ENCODE measurements at regions of chr13 and their contacts with region 1.

Region 1: DNA sequence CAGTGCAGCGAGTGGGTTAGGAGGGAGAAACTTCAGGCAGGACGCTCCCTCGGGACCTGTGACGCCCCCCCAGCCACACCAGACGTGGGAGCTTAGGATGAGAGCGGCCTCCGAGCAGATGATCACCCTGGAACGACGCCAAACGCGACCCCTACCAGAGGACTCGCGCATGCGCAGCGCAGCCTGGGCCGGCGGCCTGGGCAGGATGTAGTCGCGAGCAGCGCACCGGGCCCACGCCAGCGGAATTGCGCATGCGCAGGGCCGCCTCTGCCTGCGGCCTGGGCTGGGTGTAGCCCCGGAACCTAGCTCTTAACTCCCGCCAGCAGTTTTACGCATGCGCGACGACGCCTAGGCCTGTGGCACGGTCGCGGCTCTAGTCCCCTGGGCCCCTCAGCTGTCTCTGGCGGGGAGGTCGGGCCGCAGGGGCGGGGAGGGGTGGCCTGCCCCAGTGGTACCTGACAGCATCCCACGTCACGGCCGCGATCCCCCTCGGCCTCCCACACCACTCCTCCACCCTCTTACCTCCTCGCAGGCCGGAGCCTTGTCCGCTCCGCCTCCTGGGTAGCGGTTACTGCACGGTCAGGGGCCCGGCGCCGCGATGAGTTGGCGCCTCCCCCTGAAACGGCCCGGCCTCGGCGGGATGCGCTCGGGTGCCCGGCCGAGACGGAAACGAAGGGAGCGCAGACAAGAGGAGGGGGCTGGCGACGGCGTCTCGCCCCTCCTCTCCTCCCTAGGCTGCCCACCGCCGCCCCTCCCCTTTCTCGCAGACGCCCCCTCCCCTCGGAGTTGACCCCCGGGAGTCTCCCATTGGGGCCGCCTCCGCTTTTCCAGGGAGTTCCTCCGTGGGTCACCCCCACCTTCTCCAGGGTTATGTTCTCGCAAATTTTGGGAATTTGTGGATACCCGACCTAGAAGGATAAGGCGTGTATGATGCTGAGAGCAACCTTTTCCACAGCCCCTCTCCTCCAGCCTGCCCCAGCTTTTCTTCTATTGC is at the start of gene RCBTB2:
- DNase-seq: peak; percentile 97 to 100 (median 99)
- ATAC-seq: peak; percentile 92
- H3K4me3 ChIP-seq: peak within 1 kb of the TSS; percentile 80
- H3K4me3 Mint-ChIP-seq: peak within 1 kb of the TSS; percentile 83 to 99 (median 94)
- H3K27ac ChIP-seq: peak within 1 kb of the TSS; percentile 96
- H3K27ac Mint-ChIP-seq: peak within 1 kb of the TSS; percentile 98 to 100 (median 99)
- H3K4me1 ChIP-seq: peaks cover 10 to 16% of the 10 kb centered on the region in 2 donors
- H3K4me1 Mint-ChIP-seq: peaks cover 11 to 44% (median 31%) of the 10 kb centered on the region in 7 donors
- H3K27me3 ChIP-seq: no peaks in the 10 kb centered on the region
- H3K27me3 Mint-ChIP-seq: peaks cover 0 to 18% (median 0%) of the 10 kb centered on the region in 5 donors
- total RNA-seq, gene RCBTB2: 7.6 to 17.8 (median 10.1) TPM

Region 2: GRCh38 chr13:48094781-48095502 is 437.9 kb before region 1 on chr13 and contains the start of gene MED4:
- CTCF ChIA-PET with region 1: no interaction called
- POLR2A ChIA-PET with region 1: no interaction called
- intact Hi-C with region 1: loop called (anchors 1 to 2 kb)
- DNase-seq: peak; percentile 94 to 99 (median 98)
- ATAC-seq: peak; percentile 100
- H3K4me3 ChIP-seq: peak within 1 kb of the TSS; percentile 90
- H3K4me3 Mint-ChIP-seq: peak within 1 kb of the TSS; percentile 94 to 99 (median 96)
- H3K27ac ChIP-seq: peak within 1 kb of the TSS; percentile 99
- H3K27ac Mint-ChIP-seq: peak within 1 kb of the TSS; percentile 92 to 98 (median 96)
- H3K4me1 ChIP-seq: peaks cover 13 to 26% of the 10 kb centered on the region in 2 donors
- H3K4me1 Mint-ChIP-seq: peaks cover 26 to 56% (median 48%) of the 10 kb centered on the region in 7 donors
- H3K27me3 ChIP-seq: no peaks in the 10 kb centered on the region
- H3K27me3 Mint-ChIP-seq: peaks cover 0 to 9% (median 0%) of the 10 kb centered on the region in 5 donors
- total RNA-seq, gene MED4: 43.4 to 60.9 (median 50.0) TPM

Region 3: GRCh38 chr13:48386816-48387215 is 146.0 kb before region 1 on chr13:
- CTCF ChIA-PET with region 1: no interaction called
- POLR2A ChIA-PET with region 1: no interaction called
- intact Hi-C with region 1: no loop called
- DNase-seq: no peak
- ATAC-seq: no peak
- H3K4me3 ChIP-seq: no peak overlapping the region
- H3K4me3 Mint-ChIP-seq: no peak overlapping the region
- H3K27ac ChIP-seq: no peak overlapping the region
- H3K27ac Mint-ChIP-seq: no peak overlapping the region
- H3K4me1 ChIP-seq: no peaks in the 10 kb centered on the region
- H3K4me1 Mint-ChIP-seq: peaks cover 0 to 10% (median 6%) of the 10 kb centered on the region in 7 donors
- H3K27me3 ChIP-seq: no peaks in the 10 kb centered on the region
- H3K27me3 Mint-ChIP-seq: no peaks in the 10 kb centered on the region

Region 4: GRCh38 chr13:48412881-48413351 is 119.9 kb before region 1 on chr13 and contains the start of gene LPAR6:
- CTCF ChIA-PET with region 1: no interaction called
- POLR2A ChIA-PET with region 1: interaction called, 39 read pairs
- intact Hi-C with region 1: loop called (anchors 1 kb)
- DNase-seq: peak in 7 of 9 donors; percentile 30 to 55 (median 47)
- ATAC-seq: peak; percentile 67
- H3K4me3 ChIP-seq: peak within 1 kb of the TSS; percentile 73
- H3K4me3 Mint-ChIP-seq: peak within 1 kb of the TSS; percentile 86 to 100 (median 98)
- H3K27ac ChIP-seq: peak within 1 kb of the TSS; percentile 90
- H3K27ac Mint-ChIP-seq: peak within 1 kb of the TSS; percentile 92 to 100 (median 94)
- H3K4me1 ChIP-seq: peaks cover 9 to 19% of the 10 kb centered on the region in 2 donors
- H3K4me1 Mint-ChIP-seq: peaks cover 19 to 47% (median 40%) of the 10 kb centered on the region in 7 donors
- H3K27me3 ChIP-seq: no peaks in the 10 kb centered on the region
- H3K27me3 Mint-ChIP-seq: no peaks in the 10 kb centered on the region
- total RNA-seq, gene LPAR6: 24.1 to 60.4 (median 32.8) TPM

Region 5: GRCh38 chr13:48510698-48511097 is 22.1 kb before region 1 on chr13:
- CTCF ChIA-PET with region 1: interaction called, 4 read pairs
- POLR2A ChIA-PET with region 1: interaction called, 83 read pairs
- intact Hi-C with region 1: loop called (anchors 1 kb)
- DNase-seq: no peak
- ATAC-seq: no peak
- H3K4me3 ChIP-seq: no peak overlapping the region
- H3K4me3 Mint-ChIP-seq: no peak overlapping the region
- H3K27ac ChIP-seq: no peak overlapping the region
- H3K27ac Mint-ChIP-seq: no peak overlapping the region
- H3K4me1 ChIP-seq: peaks cover 17 to 28% of the 10 kb centered on the region in 2 donors
- H3K4me1 Mint-ChIP-seq: peaks cover 21 to 35% (median 31%) of the 10 kb centered on the region in 7 donors
- H3K27me3 ChIP-seq: no peaks in the 10 kb centered on the region
- H3K27me3 Mint-ChIP-seq: peaks cover 0 to 28% (median 0%) of the 10 kb centered on the region in 5 donors

Region 6: GRCh38 chr13:48571126-48571913 is 38.5 kb after region 1 on chr13:
- CTCF ChIA-PET with region 1: no interaction called
- POLR2A ChIA-PET with region 1: interaction called, 19 read pairs
- intact Hi-C with region 1: no loop called
- DNase-seq: no peak
- ATAC-seq: no peak
- H3K4me3 ChIP-seq: no peak overlapping the region
- H3K4me3 Mint-ChIP-seq: peak overlapping the region in 4 of 10 donors; percentile 9 to 50 (median 38)
- H3K27ac ChIP-seq: no peak overlapping the region
- H3K27ac Mint-ChIP-seq: no peak overlapping the region
- H3K4me1 ChIP-seq: peaks cover 0 to 11% of the 10 kb centered on the region in 2 donors
- H3K4me1 Mint-ChIP-seq: peaks cover 0 to 39% (median 27%) of the 10 kb centered on the region in 7 donors
- H3K27me3 ChIP-seq: no peaks in the 10 kb centered on the region
- H3K27me3 Mint-ChIP-seq: peaks cover 0 to 62% (median 4%) of the 10 kb centered on the region in 5 donors

Region 7: DNA sequence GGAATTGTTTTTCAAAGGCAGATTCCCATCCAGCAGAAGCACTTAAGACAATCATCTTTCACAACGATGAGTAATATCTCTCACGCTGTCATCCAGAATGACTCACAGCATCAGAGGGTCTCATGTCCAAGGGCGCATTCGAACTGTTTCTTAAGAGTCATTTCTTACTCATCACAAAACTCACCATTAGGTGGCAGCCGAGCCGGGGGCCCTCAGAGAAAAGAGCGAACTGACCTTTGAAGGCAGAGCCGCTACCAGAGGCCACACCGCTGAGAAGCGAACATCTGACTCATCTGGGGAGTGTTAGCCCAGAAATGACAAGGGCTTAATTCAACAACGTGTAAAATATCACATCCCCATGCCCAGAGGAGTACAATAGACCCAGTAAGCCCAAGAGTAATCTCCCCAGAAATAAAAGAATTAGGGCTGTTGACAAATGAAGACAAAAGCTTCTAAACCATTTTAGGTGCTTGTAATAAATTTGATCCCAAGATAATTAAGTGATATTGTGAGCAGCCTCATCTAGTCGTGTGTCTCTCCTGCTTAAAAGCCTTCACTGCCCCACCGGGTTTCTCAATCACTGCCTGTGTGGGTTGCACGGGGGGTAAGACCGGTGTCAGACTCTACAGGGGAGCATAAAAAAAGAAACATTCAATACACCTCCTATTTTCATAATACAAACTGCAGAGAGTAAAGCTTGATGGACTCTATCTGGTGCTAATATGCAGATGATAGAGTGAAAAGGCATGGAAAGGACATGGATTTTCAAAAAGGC is 217.1 kb after region 1 on chr13:
- CTCF ChIA-PET with region 1: no interaction called
- POLR2A ChIA-PET with region 1: no interaction called
- intact Hi-C with region 1: no loop called
- DNase-seq: peak in 1 of 9 donors; percentile 65
- ATAC-seq: peak; percentile 77
- H3K4me3 ChIP-seq: peak overlapping the region; percentile 26
- H3K4me3 Mint-ChIP-seq: no peak overlapping the region
- H3K27ac ChIP-seq: no peak overlapping the region
- H3K27ac Mint-ChIP-seq: peak overlapping the region in 1 of 9 donors; percentile 29
- H3K4me1 ChIP-seq: peaks cover 0 to 11% of the 10 kb centered on the region in 2 donors
- H3K4me1 Mint-ChIP-seq: peaks cover 0 to 6% (median 0%) of the 10 kb centered on the region in 7 donors
- H3K27me3 ChIP-seq: no peaks in the 10 kb centered on the region
- H3K27me3 Mint-ChIP-seq: peaks cover 0 to 11% (median 1%) of the 10 kb centered on the region in 5 donors

Region 8: GRCh38 chr13:49936085-49936940 is 1403.5 kb after region 1 on chr13 and contains the start of gene SPRYD7:
- CTCF ChIA-PET with region 1: no interaction called
- POLR2A ChIA-PET with region 1: no interaction called
- intact Hi-C with region 1: loop called in 1 of 2 experiments (anchors 5 kb)
- DNase-seq: peak; percentile 82 to 99 (median 90)
- ATAC-seq: peak; percentile 98
- H3K4me3 ChIP-seq: peak within 1 kb of the TSS; percentile 99
- H3K4me3 Mint-ChIP-seq: peak within 1 kb of the TSS; percentile 86 to 99 (median 96)
- H3K27ac ChIP-seq: peak within 1 kb of the TSS; percentile 69
- H3K27ac Mint-ChIP-seq: peak within 1 kb of the TSS; percentile 74 to 95 (median 86)
- H3K4me1 ChIP-seq: peaks cover 10 to 14% of the 10 kb centered on the region in 2 donors
- H3K4me1 Mint-ChIP-seq: peaks cover 12 to 28% (median 15%) of the 10 kb centered on the region in 7 donors
- H3K27me3 ChIP-seq: no peaks in the 10 kb centered on the region
- H3K27me3 Mint-ChIP-seq: peaks cover 0 to 33% (median 0%) of the 10 kb centered on the region in 5 donors
- total RNA-seq, gene SPRYD7: 1.7 to 3.1 (median 2.3) TPM

Measured in naive thymus-derived CD4-positive, alpha-beta T cell (primary cell).